ENCODE measurements at regions of chr5 and their contacts with region 1.

Region 1: DNA sequence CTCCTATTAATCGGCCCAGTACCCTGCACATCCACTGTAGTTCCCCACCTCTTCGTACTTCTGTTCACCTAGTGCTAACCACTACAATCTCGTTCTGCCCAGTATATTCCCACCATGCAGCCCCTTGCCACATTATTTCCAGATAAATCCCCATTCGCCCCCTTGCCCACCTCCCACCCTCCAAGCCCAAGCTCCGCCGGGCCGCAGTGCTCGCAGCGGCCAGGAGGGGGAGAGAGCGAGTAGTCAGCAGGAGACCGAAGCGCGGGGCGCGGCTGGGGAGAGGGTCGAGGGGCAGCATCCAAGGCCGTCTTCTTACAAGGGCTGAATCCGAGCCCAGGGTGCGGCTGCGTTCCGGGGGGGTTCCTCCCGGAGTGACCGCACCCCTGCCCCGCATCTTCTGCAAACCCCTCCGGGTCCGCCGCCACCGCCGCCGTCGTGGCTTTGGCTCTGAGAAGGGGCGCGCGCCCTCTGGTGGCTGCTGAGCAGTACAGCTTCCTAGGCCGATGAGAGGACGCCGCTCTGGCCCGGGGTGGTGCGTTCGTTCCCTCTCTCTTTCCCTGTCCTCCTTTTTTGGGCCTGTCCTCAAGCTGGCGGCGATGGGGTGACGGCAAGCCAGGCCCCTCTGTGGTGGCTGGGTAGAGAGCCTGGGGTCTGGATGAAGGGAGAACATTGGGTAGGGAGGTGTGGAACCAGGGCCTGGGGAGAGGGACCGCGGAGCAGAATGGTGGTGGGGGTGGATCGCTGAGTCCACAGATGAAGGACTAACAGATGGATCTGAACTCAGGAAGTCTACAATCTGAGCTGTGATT is 30.0 kb upstream of the PSD2 start:
- DNase-seq: peak in 9 of 10 donors; percentile 68 to 83 (median 78)
- H3K4me3 ChIP-seq: peak overlapping the region; percentile 43 to 84 (median 63)
- H3K27ac ChIP-seq: peak overlapping the region; percentile 66 to 96 (median 92)
- H3K27me3 ChIP-seq: no peaks in the 10 kb centered on the region
- CTCF ChIP-seq: peak; percentile 85 to 100 (median 99)

Region 2: DNA sequence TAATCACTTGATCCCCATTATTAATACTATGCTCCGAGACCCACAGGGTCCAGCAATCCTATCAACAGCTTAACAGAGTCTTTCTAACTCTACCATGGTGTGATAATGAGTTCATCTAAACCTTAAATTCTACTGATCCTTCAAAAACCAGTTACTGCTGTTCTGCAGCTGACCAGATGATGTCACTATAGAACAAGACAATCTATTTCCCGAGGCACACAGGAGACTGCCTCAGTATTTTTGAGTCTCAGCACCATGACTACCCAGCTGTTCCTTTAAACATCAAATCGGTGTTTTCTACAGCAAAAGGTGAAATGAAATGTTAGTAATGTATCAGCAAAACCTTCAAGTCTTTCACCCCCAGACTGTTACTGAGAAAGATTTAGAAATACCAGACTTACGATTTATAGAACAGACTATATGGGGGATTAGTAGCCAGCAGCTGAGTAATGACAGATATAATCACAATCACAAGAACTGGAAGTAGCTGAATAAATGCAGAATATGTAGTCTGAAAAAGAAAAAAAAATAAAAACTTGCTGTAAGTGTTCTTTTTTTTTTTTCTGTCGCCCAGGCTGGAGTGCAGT is 343.2 kb before region 1 on chr5:
- intact Hi-C with region 1: loop called (anchors 10 kb)
- DNase-seq: peak in 3 of 10 donors; percentile 11 to 46 (median 38)
- H3K4me3 ChIP-seq: no peak overlapping the region
- H3K27ac ChIP-seq: peak overlapping the region in 37 of 59 donors; percentile 1 to 72 (median 43)
- H3K27me3 ChIP-seq: no peaks in the 10 kb centered on the region
- CTCF ChIP-seq: peak; percentile 53 to 94 (median 81)

Region 3: DNA sequence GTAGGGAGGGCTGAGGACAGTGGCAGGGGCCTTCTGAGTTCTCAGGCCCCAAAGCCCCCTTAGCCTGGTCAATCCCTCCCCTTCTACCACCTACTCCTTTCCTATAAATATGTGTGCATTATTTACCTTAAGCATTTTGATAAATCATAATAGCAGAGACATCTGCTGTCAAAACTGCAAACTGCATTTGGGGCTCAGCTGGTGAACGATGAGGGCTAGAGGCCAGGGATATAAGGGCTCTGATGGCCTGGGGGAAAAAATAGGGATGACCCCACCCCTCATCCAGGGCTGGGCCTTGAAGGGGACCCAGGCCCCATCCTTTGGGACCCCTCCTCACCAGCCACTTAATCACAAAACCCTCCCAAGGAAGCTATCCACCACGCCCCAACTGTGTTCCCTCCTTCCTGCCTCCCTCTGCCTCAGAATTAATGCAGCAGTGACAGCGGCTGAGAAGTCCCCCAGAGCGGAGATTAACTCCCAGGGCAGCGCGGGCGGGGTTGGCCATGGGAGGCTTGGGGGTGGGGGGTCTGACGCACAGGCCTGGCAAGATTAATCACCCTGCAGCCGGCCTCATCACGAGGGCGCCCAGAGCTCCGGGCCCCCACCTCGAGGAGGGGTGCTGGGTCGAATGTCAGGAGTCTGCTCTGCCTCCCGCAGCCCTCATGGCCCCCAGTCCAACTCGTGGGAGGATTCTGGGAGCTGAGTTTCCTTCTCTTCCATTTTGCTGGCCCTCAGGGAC is 75.4 kb before region 1 on chr5:
- intact Hi-C with region 1: loop called in 1 of 2 experiments (anchors 5 kb)
- DNase-seq: peak in 1 of 10 donors; percentile 70
- H3K4me3 ChIP-seq: peak overlapping the region in 16 of 59 donors; percentile 3 to 44 (median 22)
- H3K27ac ChIP-seq: peak overlapping the region; percentile 60 to 100 (median 97)
- H3K27me3 ChIP-seq: no peaks in the 10 kb centered on the region
- CTCF ChIP-seq: peak in 55 of 56 donors; percentile 48 to 83 (median 68)

Measured in dorsolateral prefrontal cortex (tissue), 120 donors.